CD14-positive monocyte (primary cell): ENCODE measurements at regions of chr1 and their contacts with region 1.

Region 1: DNA sequence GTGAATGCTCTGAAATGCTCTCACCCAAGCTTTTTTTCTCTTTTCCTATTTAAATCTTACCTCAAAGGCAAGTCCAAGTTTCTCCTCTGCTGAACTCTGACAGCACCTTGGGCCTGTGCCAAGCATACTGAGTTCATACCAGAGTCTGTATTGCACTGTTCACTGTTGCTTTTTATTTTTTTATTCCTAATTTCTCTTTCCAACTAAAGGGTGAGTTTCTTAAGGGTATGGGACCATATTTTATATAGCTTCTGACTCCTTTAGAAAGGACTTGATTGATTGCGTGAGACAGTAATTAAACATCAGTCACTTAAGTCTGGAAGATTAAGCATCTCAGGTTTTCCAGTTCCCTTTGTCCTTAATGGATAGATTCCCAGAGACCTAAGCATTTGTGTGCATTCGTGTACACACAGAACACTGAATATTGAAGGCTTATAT is 69.9 kb downstream of the CACHD1 start:
- DNase-seq: no peak
- H3K4me3 ChIP-seq: no peak overlapping the region
- H3K4me3 Mint-ChIP-seq: no peak overlapping the region
- H3K27ac ChIP-seq: no peak overlapping the region
- H3K27ac Mint-ChIP-seq: no peak overlapping the region
- H3K4me1 ChIP-seq: peaks cover 4% of the 10 kb centered on the region in 2 donors
- H3K4me1 Mint-ChIP-seq: peaks cover 8% of the 10 kb centered on the region
- H3K27me3 ChIP-seq: no peaks in the 10 kb centered on the region
- H3K27me3 Mint-ChIP-seq: peaks cover 0 to 2% (median 1%) of the 10 kb centered on the region in 3 donors
- CTCF ChIP-seq: no peak

Region 2: DNA sequence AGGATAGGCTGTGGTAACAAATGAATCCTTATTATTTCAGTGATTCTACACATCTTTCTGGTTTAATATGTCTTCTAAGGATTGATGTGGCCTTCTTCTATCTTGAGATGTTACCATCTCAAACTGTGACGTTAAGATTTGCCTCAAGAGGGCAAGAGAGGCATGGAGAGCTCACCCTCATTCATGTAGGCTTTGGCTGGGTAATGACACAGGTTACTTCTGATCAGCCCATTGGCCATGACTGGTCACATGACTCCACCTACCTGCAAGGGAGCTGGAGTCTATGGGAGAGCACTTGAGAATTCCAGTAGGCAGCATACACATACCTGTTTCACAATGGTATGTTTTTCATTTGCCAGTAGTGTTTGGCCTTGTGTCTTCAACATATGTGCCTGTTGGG is 39.8 kb before region 1 on chr1:
- intact Hi-C with region 1: loop called in 1 of 2 experiments (anchors 5 kb)
- DNase-seq: no peak
- H3K4me3 ChIP-seq: no peak overlapping the region
- H3K4me3 Mint-ChIP-seq: no peak overlapping the region
- H3K27ac ChIP-seq: no peak overlapping the region
- H3K27ac Mint-ChIP-seq: no peak overlapping the region
- H3K4me1 ChIP-seq: peaks cover 1 to 4% of the 10 kb centered on the region in 2 donors
- H3K4me1 Mint-ChIP-seq: peaks cover 5% of the 10 kb centered on the region
- H3K27me3 ChIP-seq: no peaks in the 10 kb centered on the region
- H3K27me3 Mint-ChIP-seq: peaks cover 1 to 10% (median 3%) of the 10 kb centered on the region in 3 donors
- CTCF ChIP-seq: no peak